ENCODE measurements at regions of chr4 and their contacts with region 1.

Region 1: GRCh38 chr4:98467627-98468072 is 190.8 kb downstream of the TSPAN5 start:
- DNase-seq: peak; percentile 85
- ATAC-seq: peak; percentile 95
- H3K4me3 Mint-ChIP-seq: peak overlapping the region; percentile 52
- H3K27ac Mint-ChIP-seq: peak overlapping the region; percentile 37
- H3K4me1 Mint-ChIP-seq: peaks cover 23% of the 10 kb centered on the region
- H3K27me3 Mint-ChIP-seq: no peaks in the 10 kb centered on the region

Region 2: DNA sequence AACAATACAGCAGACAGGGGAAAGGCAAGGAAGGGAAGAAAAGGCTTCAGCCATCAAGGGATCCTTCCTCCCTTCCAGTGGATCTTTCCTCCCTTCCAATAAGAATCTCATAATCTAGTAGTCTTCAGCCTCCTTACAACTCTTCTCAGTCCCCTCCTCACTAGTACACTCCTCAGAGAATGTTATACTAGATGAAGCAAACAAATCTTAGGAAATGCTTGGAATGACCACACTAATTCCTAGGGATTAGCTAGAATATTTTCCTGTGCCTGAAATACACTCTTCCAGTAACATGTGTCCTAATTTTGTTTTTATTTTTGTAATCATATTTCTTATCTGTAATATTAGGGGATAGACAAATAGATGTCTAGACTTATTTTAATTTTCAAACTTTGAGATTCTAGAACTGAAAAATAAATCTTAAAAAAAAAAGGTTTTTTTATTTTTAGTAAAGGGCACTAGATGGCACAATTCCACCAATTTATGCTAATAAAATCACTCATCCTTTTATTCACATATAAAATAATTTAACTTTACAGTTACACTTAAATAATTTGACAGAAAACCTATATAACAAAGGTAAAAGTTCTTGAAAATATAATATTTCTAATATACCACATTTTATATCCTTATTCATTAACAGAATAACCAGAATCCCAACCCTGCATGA is 317.4 kb before region 1 on chr4:
- CTCF ChIA-PET with region 1: no interaction called
- POLR2A ChIA-PET with region 1: no interaction called
- intact Hi-C with region 1: loop called in 1 of 2 experiments (anchors 5 kb)
- DNase-seq: no peak
- ATAC-seq: no peak
- H3K4me3 Mint-ChIP-seq: no peak overlapping the region
- H3K27ac Mint-ChIP-seq: no peak overlapping the region
- H3K4me1 Mint-ChIP-seq: peaks cover 6% of the 10 kb centered on the region
- H3K27me3 Mint-ChIP-seq: peaks cover 2% of the 10 kb centered on the region

Region 3: GRCh38 chr4:98828801-98829200 is 361.2 kb after region 1 on chr4:
- CTCF ChIA-PET with region 1: interaction called, 3 read pairs
- POLR2A ChIA-PET with region 1: no interaction called
- intact Hi-C with region 1: loop called (anchors 1 kb)
- DNase-seq: peak; percentile 43
- ATAC-seq: peak; percentile 53
- H3K4me3 Mint-ChIP-seq: no peak overlapping the region
- H3K27ac Mint-ChIP-seq: no peak overlapping the region
- H3K4me1 Mint-ChIP-seq: no peaks in the 10 kb centered on the region
- H3K27me3 Mint-ChIP-seq: no peaks in the 10 kb centered on the region

Region 4: DNA sequence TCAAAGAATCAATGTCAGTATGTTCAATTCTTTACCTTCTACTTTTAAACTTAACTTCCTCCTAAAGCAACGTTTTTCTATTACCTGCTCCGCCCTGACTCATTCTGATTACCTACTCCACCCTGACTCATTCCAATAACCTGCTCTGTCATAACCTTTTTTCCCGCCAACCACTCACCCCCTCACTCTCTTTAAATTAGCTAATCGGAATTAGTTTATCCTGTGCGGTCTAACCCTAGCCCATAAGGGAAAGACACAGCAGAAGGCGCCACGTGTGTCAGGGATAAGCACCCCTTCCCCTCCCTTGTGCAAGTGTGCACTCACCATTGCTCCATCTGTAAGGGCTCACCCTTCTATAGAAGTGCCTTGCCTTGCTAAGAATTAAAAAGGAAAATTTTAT is 396.9 kb after region 1 on chr4:
- CTCF ChIA-PET with region 1: interaction called, 4 read pairs
- POLR2A ChIA-PET with region 1: no interaction called
- intact Hi-C with region 1: loop called in 1 of 2 experiments (anchors 10 kb)
- DNase-seq: peak; percentile 59
- ATAC-seq: peak; percentile 83
- H3K4me3 Mint-ChIP-seq: no peak overlapping the region
- H3K27ac Mint-ChIP-seq: no peak overlapping the region
- H3K4me1 Mint-ChIP-seq: peaks cover 9% of the 10 kb centered on the region
- H3K27me3 Mint-ChIP-seq: no peaks in the 10 kb centered on the region

Region 5: DNA sequence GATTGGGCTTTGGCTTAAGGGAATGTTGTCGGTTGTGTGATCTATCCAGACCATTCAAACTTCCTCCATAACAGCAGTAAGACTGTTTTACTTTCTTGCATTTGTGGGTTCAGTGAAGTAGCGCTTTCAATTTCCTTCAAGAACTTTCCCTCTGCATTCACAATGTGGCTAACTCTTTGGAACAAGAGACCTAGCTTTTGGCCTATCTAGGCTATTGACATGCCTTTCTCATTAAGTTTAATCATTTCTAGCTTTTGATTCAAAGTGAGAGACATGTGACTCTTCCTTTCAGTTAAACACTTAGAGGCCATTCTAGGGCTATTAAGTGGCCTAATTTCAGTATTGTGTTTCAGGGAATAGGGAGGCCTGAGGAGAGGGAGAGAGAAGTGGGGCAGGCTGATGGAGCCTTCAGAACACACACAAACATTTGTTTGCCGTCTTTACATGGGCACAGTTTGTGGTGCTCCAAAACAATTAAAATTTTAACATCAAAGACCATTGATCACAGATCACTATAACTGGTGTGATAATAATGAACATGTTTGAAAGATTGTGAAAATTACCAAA is 586.9 kb after region 1 on chr4:
- CTCF ChIA-PET with region 1: interaction called, 10 read pairs
- POLR2A ChIA-PET with region 1: no interaction called
- intact Hi-C with region 1: loop called (anchors 1 to 5 kb)
- DNase-seq: no peak
- ATAC-seq: peak; percentile 23
- H3K4me3 Mint-ChIP-seq: no peak overlapping the region
- H3K27ac Mint-ChIP-seq: peak overlapping the region; percentile 63
- H3K4me1 Mint-ChIP-seq: peaks cover 44% of the 10 kb centered on the region
- H3K27me3 Mint-ChIP-seq: no peaks in the 10 kb centered on the region

Region 6: GRCh38 chr4:99405433-99406115 is 937.9 kb after region 1 on chr4:
- CTCF ChIA-PET with region 1: interaction called, 3 read pairs
- POLR2A ChIA-PET with region 1: no interaction called
- intact Hi-C with region 1: loop called (anchors 1 to 10 kb)
- DNase-seq: peak; percentile 72
- ATAC-seq: peak; percentile 50
- H3K4me3 Mint-ChIP-seq: no peak overlapping the region
- H3K27ac Mint-ChIP-seq: no peak overlapping the region
- H3K4me1 Mint-ChIP-seq: peaks cover 7% of the 10 kb centered on the region
- H3K27me3 Mint-ChIP-seq: peaks cover 1% of the 10 kb centered on the region

Measured in activated CD4-positive, alpha-beta T cell treated with anti-CD3 and anti-CD28 coated beads for 36 hours (primary cell).